Left cardiac atrium (tissue), 4 donors: ENCODE measurements at regions of chr12 and their contacts with region 1.

Region 1: GRCh38 chr12:46209914-46210872 is 58.6 kb downstream of the SLC38A1 start:
- DNase-seq: peak; percentile 35
- ATAC-seq: peak; percentile 76 to 87

Region 2: GRCh38 chr12:45775964-45776363 is 434.2 kb before region 1 on chr12:
- intact Hi-C with region 1: no loop called
- DNase-seq: no peak
- ATAC-seq: no peak

Region 3: GRCh38 chr12:46268590-46269558 is 58.7 kb after region 1 on chr12 and contains the start of gene SLC38A1:
- intact Hi-C with region 1: loop called in 1 of 2 experiments (anchors 2 kb)
- DNase-seq: peak; percentile 87
- ATAC-seq: peak; percentile 81 to 84
- total RNA-seq, gene SLC38A1: 74.6 to 172 TPM

Region 4: GRCh38 chr12:46472893-46473633 is 262.9 kb after region 1 on chr12:
- intact Hi-C with region 1: no loop called
- DNase-seq: no peak
- ATAC-seq: peak; percentile 38 to 53